Activated CD4-positive, alpha-beta memory T cell treated with anti-CD3 and anti-CD28 coated beads for 36 hours (primary cell): ENCODE measurements at regions of chr2 and their contacts with region 1.

Region 1: DNA sequence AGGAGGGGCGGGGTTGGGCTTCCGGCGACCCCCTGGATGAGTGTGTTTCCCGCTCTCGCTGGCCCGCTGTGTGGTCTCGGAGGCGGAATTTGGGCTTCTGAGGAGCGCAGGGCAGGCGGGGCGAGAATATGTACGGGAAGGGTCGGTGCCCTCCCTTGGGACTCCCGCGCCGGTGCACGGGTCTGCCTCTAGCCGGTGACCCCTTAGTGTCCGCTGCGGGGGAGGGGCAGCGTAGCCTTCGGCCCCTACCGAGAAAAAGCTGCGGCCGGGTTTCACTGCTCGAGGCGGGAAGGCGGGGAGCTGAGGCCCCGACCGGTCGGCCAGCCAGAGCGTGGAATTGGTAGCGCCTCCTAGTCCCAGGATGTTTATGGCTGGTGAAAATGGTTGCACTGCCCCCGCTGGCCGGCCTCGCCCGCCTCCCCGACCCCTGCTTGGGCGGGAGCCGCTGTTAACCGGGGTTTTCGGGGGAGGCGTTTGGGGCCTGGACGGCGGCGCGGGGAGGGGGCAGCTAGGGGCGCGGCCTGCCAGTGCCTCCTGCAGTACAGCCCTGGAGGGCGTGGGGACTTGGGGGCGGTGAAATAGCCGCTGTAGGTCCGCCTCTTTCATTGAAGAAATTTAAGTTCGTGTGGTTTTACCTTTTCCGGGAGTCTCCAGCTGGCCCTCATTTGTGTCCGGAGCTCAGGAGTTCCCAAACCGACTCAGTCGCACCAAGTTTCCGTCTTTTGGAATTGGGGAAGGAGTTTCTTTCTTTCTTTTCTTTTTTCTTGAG is at the start of gene UGP2:
- DNase-seq: peak; percentile 91
- H3K4me3 Mint-ChIP-seq: peak within 1 kb of the TSS; percentile 99
- H3K27ac Mint-ChIP-seq: peak within 1 kb of the TSS; percentile 100
- H3K4me1 Mint-ChIP-seq: peaks cover 44% of the 10 kb centered on the region
- H3K27me3 Mint-ChIP-seq: no peaks in the 10 kb centered on the region
- total RNA-seq, gene UGP2: 113 to 119 TPM

Region 2: DNA sequence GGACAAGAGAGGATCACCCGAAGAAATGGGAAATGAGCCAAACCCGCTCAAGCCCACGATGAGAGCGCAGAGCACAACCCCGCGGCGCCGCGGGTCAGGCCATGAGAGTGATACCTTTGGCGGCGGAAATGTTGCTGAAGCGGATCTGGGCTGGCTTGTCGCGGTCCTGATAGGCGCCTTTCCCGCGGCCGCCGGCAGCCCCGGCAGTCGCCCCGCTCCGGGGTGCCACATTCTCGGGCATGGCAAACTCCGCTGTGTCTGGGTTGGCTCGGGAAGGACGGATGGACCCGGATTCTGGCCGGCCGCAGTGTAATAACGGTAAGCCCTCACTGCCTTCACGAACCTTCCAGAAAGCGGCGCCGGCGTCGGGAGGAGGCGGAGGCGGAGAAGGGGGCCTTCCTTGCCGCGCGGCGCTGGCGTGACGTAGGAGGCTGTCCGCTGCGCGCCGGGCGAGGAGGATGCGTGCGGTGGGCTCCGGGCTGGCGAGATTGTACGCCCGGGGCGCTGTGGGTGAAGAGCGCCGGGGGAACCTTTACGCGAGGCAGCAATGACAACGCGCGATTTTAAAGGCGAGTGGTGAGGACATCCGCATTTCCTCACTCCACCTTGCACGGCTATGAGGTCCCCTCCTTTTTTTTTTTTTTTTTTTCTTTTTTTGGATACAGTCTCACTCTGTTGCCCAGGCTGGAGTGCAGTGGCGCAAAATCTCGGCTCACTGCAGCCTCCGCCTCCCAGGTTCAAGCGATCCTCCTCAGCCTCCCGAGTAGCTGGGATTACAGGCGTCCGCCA is 1953.0 kb before region 1 on chr2 and contains the start of gene CCT4:
- CTCF ChIA-PET with region 1: no interaction called
- POLR2A ChIA-PET with region 1: no interaction called
- intact Hi-C with region 1: loop called (anchors 5 kb)
- DNase-seq: peak; percentile 92
- H3K4me3 Mint-ChIP-seq: peak within 1 kb of the TSS; percentile 99
- H3K27ac Mint-ChIP-seq: peak within 1 kb of the TSS; percentile 99
- H3K4me1 Mint-ChIP-seq: peaks cover 26% of the 10 kb centered on the region
- H3K27me3 Mint-ChIP-seq: no peaks in the 10 kb centered on the region
- total RNA-seq, gene CCT4: 345 to 352 TPM

Region 3: DNA sequence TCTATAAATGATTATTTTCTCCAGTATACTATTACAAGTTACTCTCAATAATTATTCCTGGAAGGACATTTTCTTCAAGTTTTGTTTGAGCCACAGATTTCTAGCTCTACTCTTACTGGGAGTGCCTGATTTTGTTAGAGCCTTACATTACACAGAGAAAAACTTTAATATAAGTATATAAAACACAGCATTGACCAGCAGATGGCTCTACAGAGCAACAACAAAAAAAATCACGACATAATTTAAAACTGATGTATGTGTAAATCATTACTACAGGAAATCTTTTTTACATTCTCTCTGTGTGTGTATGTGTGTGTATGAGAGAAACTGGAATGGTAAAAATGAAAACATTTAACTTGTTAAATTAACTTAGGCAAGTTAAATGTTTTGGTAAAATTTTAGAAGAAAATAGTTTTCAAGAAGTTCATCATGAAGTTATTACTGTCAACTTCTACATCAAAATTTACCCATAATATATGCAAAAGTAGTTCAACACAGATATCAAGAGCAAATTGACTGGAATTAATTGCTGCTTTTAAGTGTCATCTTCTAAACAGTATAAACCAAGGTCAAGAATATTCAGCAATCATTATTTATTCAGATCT is 149.3 kb before region 1 on chr2:
- CTCF ChIA-PET with region 1: interaction called, 8 read pairs
- POLR2A ChIA-PET with region 1: no interaction called
- intact Hi-C with region 1: loop called (anchors 5 kb)
- DNase-seq: no peak
- H3K4me3 Mint-ChIP-seq: no peak overlapping the region
- H3K27ac Mint-ChIP-seq: no peak overlapping the region
- H3K4me1 Mint-ChIP-seq: no peaks in the 10 kb centered on the region
- H3K27me3 Mint-ChIP-seq: no peaks in the 10 kb centered on the region

Region 4: DNA sequence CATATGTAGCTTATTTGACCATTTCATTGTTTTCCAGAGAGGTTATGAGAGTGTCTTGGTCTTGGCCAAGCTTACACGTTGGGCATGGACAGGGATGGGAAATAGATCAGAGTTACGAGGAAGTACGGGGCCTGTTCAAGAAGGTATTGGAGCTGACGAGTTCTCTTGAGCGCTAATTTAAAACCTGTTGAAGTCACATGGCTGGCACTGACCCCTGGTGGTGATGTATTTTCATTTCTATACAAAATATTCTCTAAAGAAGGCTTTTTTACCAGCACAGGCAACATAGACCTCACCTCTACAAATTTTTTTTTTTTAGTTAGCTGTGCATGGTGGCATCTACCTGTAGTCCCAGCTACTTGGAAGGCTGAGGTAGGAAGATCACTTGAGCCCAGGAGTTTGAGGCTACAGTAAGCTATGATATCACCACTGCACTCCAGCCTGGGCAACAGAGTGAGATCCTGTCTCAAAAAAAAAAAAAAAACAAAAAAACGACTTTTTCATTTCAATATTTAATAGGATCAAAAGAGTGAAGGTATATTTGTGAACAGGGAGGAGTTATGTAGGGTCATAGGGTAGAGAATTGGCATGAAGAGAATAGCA is 19.9 kb after region 1 on chr2:
- CTCF ChIA-PET with region 1: interaction called, 16 read pairs
- POLR2A ChIA-PET with region 1: interaction called, 10 read pairs
- intact Hi-C with region 1: loop called (anchors 1 kb)
- DNase-seq: peak; percentile 56
- H3K4me3 Mint-ChIP-seq: no peak overlapping the region
- H3K27ac Mint-ChIP-seq: no peak overlapping the region
- H3K4me1 Mint-ChIP-seq: peaks cover 44% of the 10 kb centered on the region
- H3K27me3 Mint-ChIP-seq: no peaks in the 10 kb centered on the region

Region 5: DNA sequence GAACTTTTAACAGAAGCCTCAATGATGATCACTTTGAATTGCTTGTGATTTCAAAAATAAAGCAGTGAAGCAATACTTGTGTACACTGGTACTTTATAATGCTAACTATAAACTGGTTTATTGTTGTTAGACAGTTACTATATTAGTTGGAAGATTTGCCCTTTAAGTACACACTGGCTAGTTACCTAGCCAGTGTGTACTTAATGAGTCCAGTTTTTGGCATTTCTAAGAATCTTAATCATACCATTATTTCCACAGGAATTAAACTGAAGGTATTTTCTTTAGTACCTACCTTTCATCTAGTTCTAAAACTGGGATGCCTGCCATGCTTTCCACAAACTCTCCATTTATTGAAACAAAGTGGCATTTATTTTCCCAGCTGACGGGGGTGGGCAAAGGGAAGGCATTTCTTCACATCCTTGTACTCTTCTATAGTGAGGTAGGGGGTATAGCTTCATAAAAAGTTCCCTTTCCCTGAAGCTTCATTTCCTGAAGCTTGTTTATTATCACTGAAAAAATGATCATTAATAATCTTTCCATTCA is 50.1 kb after region 1 on chr2:
- CTCF ChIA-PET with region 1: no interaction called
- POLR2A ChIA-PET with region 1: no interaction called
- intact Hi-C with region 1: no loop called
- DNase-seq: no peak
- H3K4me3 Mint-ChIP-seq: no peak overlapping the region
- H3K27ac Mint-ChIP-seq: no peak overlapping the region
- H3K4me1 Mint-ChIP-seq: peaks cover 5% of the 10 kb centered on the region
- H3K27me3 Mint-ChIP-seq: no peaks in the 10 kb centered on the region

Region 6: DNA sequence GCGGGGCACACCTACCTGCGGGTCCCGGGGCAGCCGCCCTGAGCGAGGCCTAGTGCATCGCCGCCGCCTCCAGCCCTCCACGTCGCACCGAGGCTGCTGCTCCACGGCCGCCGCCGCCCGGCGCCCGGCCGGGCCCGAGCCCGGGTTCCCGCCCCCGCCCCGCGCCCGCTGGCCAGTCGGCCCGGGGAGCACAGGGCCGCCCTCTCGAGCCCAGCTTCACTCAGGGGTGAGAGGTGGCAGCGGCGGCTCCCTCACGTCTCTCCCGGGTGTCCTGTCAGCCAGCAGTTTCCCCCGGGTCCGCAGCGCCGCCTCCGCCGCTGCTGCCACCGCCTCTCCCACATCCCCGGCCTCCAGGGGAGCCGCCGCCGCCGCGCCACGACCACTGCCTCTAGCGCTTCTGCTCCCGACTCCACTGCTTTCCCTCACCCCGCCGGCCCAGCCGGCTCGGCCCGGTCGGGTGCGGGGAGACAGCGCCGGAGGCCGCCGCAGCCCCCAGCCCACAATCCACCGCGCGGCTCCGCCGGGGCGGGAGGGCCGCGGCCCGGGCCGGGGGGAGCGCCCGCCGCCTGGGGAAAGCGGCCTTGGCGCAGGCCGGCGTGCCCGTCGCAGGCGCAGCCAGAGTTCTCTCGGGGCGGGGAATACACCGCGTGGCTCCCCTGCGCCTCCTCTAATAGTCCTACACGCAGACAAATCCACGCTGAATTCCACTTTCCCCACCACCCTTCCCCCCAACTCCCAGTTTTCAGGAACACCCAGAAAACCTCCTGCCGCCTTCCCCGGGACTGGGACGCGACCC is 177.7 kb after region 1 on chr2 and contains the start of gene VPS54:
- CTCF ChIA-PET with region 1: no interaction called
- POLR2A ChIA-PET with region 1: no interaction called
- intact Hi-C with region 1: loop called (anchors 2 kb)
- DNase-seq: peak; percentile 63
- H3K4me3 Mint-ChIP-seq: peak within 1 kb of the TSS; percentile 98
- H3K27ac Mint-ChIP-seq: peak within 1 kb of the TSS; percentile 93
- H3K4me1 Mint-ChIP-seq: peaks cover 41% of the 10 kb centered on the region
- H3K27me3 Mint-ChIP-seq: no peaks in the 10 kb centered on the region
- total RNA-seq, gene VPS54: 12.5 to 12.8 TPM